Activated CD8-positive, alpha-beta T cell treated with anti-CD3 and anti-CD28 coated beads for 36 hours (primary cell): ENCODE measurements at regions of chr6 and their contacts with region 1.

Region 1: DNA sequence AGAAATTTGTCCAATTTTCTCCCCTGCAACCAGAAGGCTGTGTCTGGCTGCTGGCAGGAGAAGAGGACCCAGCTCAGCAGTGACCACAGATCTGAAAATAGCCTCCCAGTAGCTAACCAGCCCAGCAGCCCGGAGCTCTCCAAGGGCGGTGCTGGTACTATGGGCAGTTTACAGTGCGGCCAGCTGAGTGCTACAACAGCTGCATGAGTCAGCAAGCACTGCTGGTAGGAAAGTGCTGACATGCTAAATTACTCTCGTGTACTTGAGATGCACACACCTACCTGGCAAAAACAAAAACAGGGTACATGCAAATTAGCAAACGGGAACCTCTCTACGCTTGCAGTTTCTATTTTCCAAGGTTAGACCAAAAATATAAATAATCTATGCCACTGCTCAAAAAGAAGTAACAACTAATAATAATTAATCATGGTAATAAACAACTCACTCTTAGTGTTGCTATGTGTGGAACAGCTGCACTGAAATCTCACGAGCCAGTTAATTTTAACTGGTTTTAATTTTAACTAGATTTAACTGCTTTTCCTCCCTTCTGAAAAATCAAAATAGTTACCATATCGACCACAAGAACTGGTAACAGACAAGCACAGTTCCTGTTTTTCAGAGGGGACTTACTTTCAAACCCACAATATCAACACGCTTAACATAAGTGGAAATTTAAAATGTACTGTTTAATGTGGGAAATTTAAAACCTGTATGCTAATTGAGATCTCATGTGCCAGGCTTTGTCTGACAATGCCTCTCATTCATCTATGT is 10.8 kb downstream of the BACH2 start:
- DNase-seq: peak; percentile 80
- ATAC-seq: peak; percentile 40
- H3K4me3 Mint-ChIP-seq: peak overlapping the region; percentile 64
- H3K27ac Mint-ChIP-seq: peak overlapping the region; percentile 94
- H3K4me1 Mint-ChIP-seq: peaks cover 87% of the 10 kb centered on the region
- H3K27me3 Mint-ChIP-seq: no peaks in the 10 kb centered on the region
- CTCF ChIP-seq: no peak

Region 2: GRCh38 chr6:90025523-90026061 is 260.2 kb before region 1 on chr6:
- CTCF ChIA-PET with region 1: no interaction called
- POLR2A ChIA-PET with region 1: no interaction called
- intact Hi-C with region 1: no loop called
- DNase-seq: peak; percentile 75
- ATAC-seq: peak; percentile 92
- H3K4me3 Mint-ChIP-seq: peak overlapping the region; percentile 28
- H3K27ac Mint-ChIP-seq: peak overlapping the region; percentile 90
- H3K4me1 Mint-ChIP-seq: peaks cover 85% of the 10 kb centered on the region
- H3K27me3 Mint-ChIP-seq: no peaks in the 10 kb centered on the region
- CTCF ChIP-seq: no peak

Region 3: GRCh38 chr6:90251295-90251992 is 34.4 kb before region 1 on chr6:
- CTCF ChIA-PET with region 1: no interaction called
- POLR2A ChIA-PET with region 1: interaction called, 21 read pairs
- intact Hi-C with region 1: loop called (anchors 2 kb)
- DNase-seq: no peak
- ATAC-seq: peak; percentile 59
- H3K4me3 Mint-ChIP-seq: peak overlapping the region; percentile 58
- H3K27ac Mint-ChIP-seq: peak overlapping the region; percentile 90
- H3K4me1 Mint-ChIP-seq: peaks cover 86% of the 10 kb centered on the region
- H3K27me3 Mint-ChIP-seq: no peaks in the 10 kb centered on the region
- CTCF ChIP-seq: no peak

Region 4: GRCh38 chr6:90274451-90275030 is 11.3 kb before region 1 on chr6:
- CTCF ChIA-PET with region 1: interaction called, 17 read pairs
- POLR2A ChIA-PET with region 1: interaction called, 31 read pairs
- intact Hi-C with region 1: no loop called
- DNase-seq: peak; percentile 99
- ATAC-seq: peak; percentile 84
- H3K4me3 Mint-ChIP-seq: peak overlapping the region; percentile 47
- H3K27ac Mint-ChIP-seq: peak overlapping the region; percentile 96
- H3K4me1 Mint-ChIP-seq: peaks cover 87% of the 10 kb centered on the region
- H3K27me3 Mint-ChIP-seq: no peaks in the 10 kb centered on the region
- CTCF ChIP-seq: no peak

Region 5: DNA sequence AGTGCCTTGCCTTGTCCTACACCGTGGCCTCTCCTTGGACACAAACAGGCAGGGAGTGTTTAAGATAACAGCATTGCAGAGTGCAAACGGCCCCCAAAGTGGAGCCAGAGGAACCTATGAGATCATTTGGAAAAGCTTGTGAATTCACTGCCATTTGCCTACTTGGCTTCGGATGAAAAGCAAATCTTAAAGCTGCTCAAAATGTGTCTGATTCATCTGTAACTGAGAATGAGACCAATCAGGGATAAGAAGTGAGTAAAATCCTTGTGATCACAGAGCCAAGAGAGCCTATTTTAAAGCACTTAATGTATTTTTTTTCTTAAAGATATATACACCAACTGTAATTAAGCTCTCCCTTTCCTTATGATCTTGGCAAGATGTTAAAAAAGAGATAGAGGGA is 76.5 kb after region 1 on chr6:
- CTCF ChIA-PET with region 1: no interaction called
- POLR2A ChIA-PET with region 1: no interaction called
- intact Hi-C with region 1: no loop called
- DNase-seq: no peak
- ATAC-seq: no peak
- H3K4me3 Mint-ChIP-seq: no peak overlapping the region
- H3K27ac Mint-ChIP-seq: no peak overlapping the region
- H3K4me1 Mint-ChIP-seq: peaks cover 10% of the 10 kb centered on the region
- H3K27me3 Mint-ChIP-seq: no peaks in the 10 kb centered on the region
- CTCF ChIP-seq: no peak

Region 6: GRCh38 chr6:90448836-90449235 is 163.0 kb after region 1 on chr6:
- CTCF ChIA-PET with region 1: no interaction called
- POLR2A ChIA-PET with region 1: no interaction called
- intact Hi-C with region 1: no loop called
- DNase-seq: no peak
- ATAC-seq: no peak
- H3K4me3 Mint-ChIP-seq: no peak overlapping the region
- H3K27ac Mint-ChIP-seq: no peak overlapping the region
- H3K4me1 Mint-ChIP-seq: peaks cover 31% of the 10 kb centered on the region
- H3K27me3 Mint-ChIP-seq: no peaks in the 10 kb centered on the region
- CTCF ChIP-seq: no peak

Region 7: GRCh38 chr6:90466154-90466940 is 180.6 kb after region 1 on chr6:
- CTCF ChIA-PET with region 1: interaction called, 231 read pairs
- POLR2A ChIA-PET with region 1: interaction called, 4 read pairs
- intact Hi-C with region 1: loop called (anchors 2 kb)
- DNase-seq: peak; percentile 73
- ATAC-seq: peak; percentile 80
- H3K4me3 Mint-ChIP-seq: peak overlapping the region; percentile 23
- H3K27ac Mint-ChIP-seq: peak overlapping the region; percentile 92
- H3K4me1 Mint-ChIP-seq: peaks cover 82% of the 10 kb centered on the region
- H3K27me3 Mint-ChIP-seq: no peaks in the 10 kb centered on the region
- CTCF ChIP-seq: no peak